ENCODE measurements at regions of chr14 and their contacts with region 1.

Region 1: GRCh38 chr14:27305441-27305945 is 707.7 kb upstream of the NOVA1 start:
- DNase-seq: no peak
- ATAC-seq: no peak
- H3K4me3 ChIP-seq: no peak overlapping the region
- H3K4me3 Mint-ChIP-seq: no peak overlapping the region
- H3K27ac ChIP-seq: no peak overlapping the region
- H3K27ac Mint-ChIP-seq: no peak overlapping the region
- H3K4me1 ChIP-seq: no peaks in the 10 kb centered on the region
- H3K4me1 Mint-ChIP-seq: no peaks in the 10 kb centered on the region
- H3K27me3 ChIP-seq: no peaks in the 10 kb centered on the region
- H3K27me3 Mint-ChIP-seq: no peaks in the 10 kb centered on the region
- CTCF ChIP-seq: no peak

Region 2: DNA sequence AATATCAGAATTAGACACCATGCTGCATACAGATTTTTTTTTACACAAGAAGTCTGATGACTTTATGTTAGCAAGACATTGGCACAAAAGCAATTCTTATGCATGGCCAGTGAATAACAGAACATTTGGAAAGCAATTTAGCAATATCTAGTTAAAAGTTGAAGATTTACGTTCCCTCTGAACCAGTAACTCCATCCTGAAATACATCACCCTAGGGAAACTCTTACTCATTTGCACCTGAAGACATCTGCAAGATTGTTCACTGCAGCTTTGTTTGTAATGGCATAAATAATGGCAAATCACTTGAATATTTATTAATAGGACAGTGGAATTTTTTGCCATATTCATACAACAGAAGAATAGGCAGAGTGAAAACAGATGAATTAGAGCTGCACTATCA is 37.6 kb before region 1 on chr14:
- CTCF ChIA-PET with region 1: no interaction called
- POLR2A ChIA-PET with region 1: no interaction called
- intact Hi-C with region 1: loop called in 1 of 2 experiments (anchors 2 kb)
- DNase-seq: no peak
- ATAC-seq: no peak
- H3K4me3 ChIP-seq: no peak overlapping the region
- H3K4me3 Mint-ChIP-seq: no peak overlapping the region
- H3K27ac ChIP-seq: no peak overlapping the region
- H3K27ac Mint-ChIP-seq: no peak overlapping the region
- H3K4me1 ChIP-seq: no peaks in the 10 kb centered on the region
- H3K4me1 Mint-ChIP-seq: no peaks in the 10 kb centered on the region
- H3K27me3 ChIP-seq: no peaks in the 10 kb centered on the region
- H3K27me3 Mint-ChIP-seq: no peaks in the 10 kb centered on the region
- CTCF ChIP-seq: no peak